Esophagus muscularis mucosa (tissue), 4 donors: ENCODE measurements at regions of chr6 and their contacts with region 1.

Region 1: DNA sequence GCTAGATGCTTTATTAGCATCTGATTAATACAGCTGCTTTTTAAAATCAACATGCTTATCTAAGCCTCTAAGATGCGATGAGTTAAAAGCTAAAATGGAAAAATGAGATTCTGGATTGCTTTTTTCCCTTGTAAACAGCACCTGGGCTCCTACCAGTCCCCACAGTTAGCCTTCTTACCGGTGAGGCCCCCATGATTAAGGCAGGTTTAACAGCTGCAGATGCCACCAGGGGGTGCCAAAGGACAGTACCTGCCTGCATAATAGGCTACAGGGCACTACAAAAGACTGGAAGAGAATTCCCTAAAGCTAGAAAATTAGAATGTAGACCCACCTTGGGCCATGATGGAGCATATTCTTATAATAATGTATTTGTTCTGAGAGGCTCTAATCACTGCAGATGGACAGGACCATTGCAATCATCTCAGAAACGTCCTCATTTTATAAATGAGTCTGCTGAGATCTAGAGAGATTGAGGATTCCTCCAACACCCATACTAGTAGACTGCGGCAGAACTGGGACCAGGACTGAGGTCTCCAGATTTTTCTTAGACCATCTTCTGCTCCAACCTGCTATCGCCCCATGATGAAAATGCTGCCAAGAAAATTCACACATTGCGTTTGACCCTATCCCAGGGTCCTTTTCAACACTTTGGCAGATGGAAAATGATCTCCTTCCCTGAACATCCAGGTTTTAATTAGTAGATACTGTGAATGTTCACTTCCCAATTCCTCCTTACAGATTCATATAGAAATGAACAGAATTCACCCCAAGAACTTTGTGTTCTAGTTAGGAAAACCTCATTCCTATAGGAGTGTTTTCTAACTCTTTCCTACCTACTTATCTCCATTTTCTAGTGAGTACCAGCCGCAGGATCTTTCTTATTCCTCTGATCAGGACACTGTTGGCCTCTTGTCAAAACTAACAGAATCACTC is 148.8 kb downstream of the RPS12 start:
- DNase-seq: no peak
- H3K4me3 ChIP-seq: no peak overlapping the region
- H3K27ac ChIP-seq: no peak overlapping the region
- H3K4me1 ChIP-seq: peaks cover 10 to 17% (median 14%) of the 10 kb centered on the region in 4 donors
- H3K27me3 ChIP-seq: no peaks in the 10 kb centered on the region
- CTCF ChIP-seq: peak; percentile 59 to 71 (median 64)
- EP300 ChIP-seq: no peak
- POLR2A ChIP-seq: no peak

Region 2: DNA sequence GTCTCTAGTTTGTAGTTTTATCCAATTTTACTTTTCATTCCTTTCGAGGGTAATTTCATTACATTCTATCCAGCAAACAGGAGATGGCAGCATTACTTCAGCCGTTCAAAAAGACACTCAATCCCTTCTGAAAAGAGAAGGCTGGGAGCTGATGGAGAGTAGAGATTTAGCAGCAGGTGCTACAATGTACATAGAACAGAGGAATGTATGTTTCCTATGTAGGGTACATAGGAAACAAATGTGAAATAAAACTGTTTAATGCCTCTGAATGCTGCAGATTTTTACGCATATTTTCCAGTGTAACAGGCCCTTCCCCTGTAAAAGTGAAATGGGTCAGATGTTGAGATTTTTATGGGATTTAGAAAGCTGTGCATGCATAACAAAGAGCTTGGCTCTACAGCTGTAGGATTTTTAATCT is 132.9 kb before region 1 on chr6:
- intact Hi-C with region 1: loop called (anchors 5 kb)
- DNase-seq: no peak
- H3K4me3 ChIP-seq: no peak overlapping the region
- H3K27ac ChIP-seq: no peak overlapping the region
- H3K4me1 ChIP-seq: peaks cover 0 to 8% (median 0%) of the 10 kb centered on the region in 4 donors
- H3K27me3 ChIP-seq: no peaks in the 10 kb centered on the region
- CTCF ChIP-seq: peak; percentile 41 to 58 (median 43)
- EP300 ChIP-seq: no peak
- POLR2A ChIP-seq: no peak

Region 3: GRCh38 chr6:133017581-133017980 is 54.4 kb after region 1 on chr6:
- intact Hi-C with region 1: no loop called
- DNase-seq: no peak
- H3K4me3 ChIP-seq: no peak overlapping the region
- H3K27ac ChIP-seq: no peak overlapping the region
- H3K4me1 ChIP-seq: no peaks in the 10 kb centered on the region
- H3K27me3 ChIP-seq: no peaks in the 10 kb centered on the region
- CTCF ChIP-seq: no peak
- EP300 ChIP-seq: no peak
- POLR2A ChIP-seq: no peak

Region 4: GRCh38 chr6:133512410-133513016 is 549.3 kb after region 1 on chr6:
- intact Hi-C with region 1: loop called (anchors 5 kb)
- DNase-seq: no peak
- H3K4me3 ChIP-seq: no peak overlapping the region
- H3K27ac ChIP-seq: no peak overlapping the region
- H3K4me1 ChIP-seq: no peaks in the 10 kb centered on the region
- H3K27me3 ChIP-seq: no peaks in the 10 kb centered on the region
- CTCF ChIP-seq: peak; percentile 57 to 61 (median 57)
- EP300 ChIP-seq: no peak
- POLR2A ChIP-seq: no peak

Region 5: DNA sequence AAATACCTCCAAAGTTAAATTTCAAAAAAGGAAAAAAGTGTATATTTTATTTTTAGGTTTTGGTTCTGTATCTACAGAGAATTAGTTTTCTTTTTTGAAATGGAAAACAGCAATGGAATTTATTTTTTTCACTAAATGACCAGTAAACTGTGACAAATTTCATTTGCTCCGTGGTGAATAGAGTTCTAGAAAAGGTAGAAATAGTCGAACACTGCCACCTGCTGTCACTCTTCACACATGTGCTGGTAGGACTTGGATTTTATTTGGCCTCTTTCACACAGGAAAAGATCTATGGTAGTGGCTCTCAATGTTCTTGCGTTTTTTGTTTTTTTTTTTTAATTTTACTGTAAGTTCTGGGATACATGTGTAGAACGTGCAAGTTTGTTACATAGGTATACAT is 590.5 kb after region 1 on chr6:
- intact Hi-C with region 1: loop called (anchors 5 kb)
- DNase-seq: no peak
- H3K4me3 ChIP-seq: no peak overlapping the region
- H3K27ac ChIP-seq: no peak overlapping the region
- H3K4me1 ChIP-seq: peaks cover 0 to 29% (median 27%) of the 10 kb centered on the region in 4 donors
- H3K27me3 ChIP-seq: no peaks in the 10 kb centered on the region
- CTCF ChIP-seq: peak; percentile 57 to 69 (median 62)
- EP300 ChIP-seq: no peak
- POLR2A ChIP-seq: no peak